Esophagus squamous epithelium (tissue), 5 donors: ENCODE measurements at regions of chr6 and their contacts with region 1.

Region 1: GRCh38 chr6:130322673-130323268 is 43.0 kb upstream of the TMEM200A start:
- DNase-seq: no peak
- H3K4me3 ChIP-seq: no peak overlapping the region
- H3K27ac ChIP-seq: no peak overlapping the region
- H3K4me1 ChIP-seq: no peaks in the 10 kb centered on the region
- H3K27me3 ChIP-seq: no peaks in the 10 kb centered on the region
- CTCF ChIP-seq: peak; percentile 30 to 86 (median 80)
- POLR2A ChIP-seq: no peak

Region 2: DNA sequence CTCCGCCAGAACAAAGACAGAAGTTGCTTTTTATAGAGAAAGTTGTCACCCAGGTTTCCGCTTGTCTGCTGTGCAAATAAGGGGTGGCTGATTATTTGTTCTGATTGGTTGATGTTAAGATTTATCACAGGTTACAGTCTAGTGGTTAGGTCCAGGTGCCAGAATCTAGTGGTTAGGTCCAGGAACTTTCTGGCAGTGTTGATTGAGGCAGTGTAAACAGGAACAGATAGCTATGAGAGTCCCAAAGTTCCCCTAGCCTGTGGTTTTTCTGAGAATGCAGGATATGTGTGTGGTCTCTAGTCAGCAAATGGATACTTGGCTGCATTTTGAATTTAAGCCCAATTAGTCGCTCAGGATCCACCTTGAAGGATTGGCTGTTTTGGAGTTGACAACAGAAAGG is 191.0 kb after region 1 on chr6:
- intact Hi-C with region 1: no loop called
- DNase-seq: no peak
- H3K4me3 ChIP-seq: no peak overlapping the region
- H3K27ac ChIP-seq: no peak overlapping the region
- H3K4me1 ChIP-seq: peaks cover 0 to 13% (median 0%) of the 10 kb centered on the region in 3 donors
- H3K27me3 ChIP-seq: no peaks in the 10 kb centered on the region
- CTCF ChIP-seq: no peak
- POLR2A ChIP-seq: no peak

Region 3: DNA sequence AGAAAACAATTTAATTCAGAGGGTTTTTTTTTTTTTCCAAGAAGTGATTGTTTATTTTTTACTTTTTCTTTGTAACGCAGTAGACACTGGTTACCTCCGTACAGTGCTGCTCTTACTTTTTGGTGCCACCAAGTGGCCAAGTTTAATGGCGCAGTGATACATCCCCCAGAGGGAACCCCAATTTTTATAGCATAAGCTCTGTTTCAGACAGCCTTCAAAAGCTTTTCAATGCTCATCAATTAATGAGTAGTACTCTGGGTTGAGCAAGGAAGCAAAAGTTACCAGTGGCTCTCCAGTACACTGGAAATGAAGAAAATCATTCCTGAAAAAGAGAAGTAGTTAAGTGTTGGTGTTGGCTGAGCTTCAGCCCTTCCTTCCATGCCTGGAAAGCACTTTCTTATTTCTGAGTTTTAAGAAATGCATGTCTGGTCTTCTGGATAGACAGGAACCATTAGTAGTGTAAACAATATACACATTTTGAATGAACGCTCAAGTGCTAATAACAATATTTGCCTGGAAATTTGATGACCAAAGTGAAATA is 375.3 kb after region 1 on chr6:
- intact Hi-C with region 1: loop called (anchors 5 kb)
- DNase-seq: no peak
- H3K4me3 ChIP-seq: no peak overlapping the region
- H3K27ac ChIP-seq: no peak overlapping the region
- H3K4me1 ChIP-seq: peaks cover 0 to 4% (median 0%) of the 10 kb centered on the region in 3 donors
- H3K27me3 ChIP-seq: peaks cover 0 to 12% (median 0%) of the 10 kb centered on the region in 4 donors
- CTCF ChIP-seq: peak; percentile 45 to 79 (median 68)
- POLR2A ChIP-seq: no peak

Region 4: GRCh38 chr6:130853555-130854183 is 530.9 kb after region 1 on chr6:
- intact Hi-C with region 1: loop called (anchors 10 kb)
- DNase-seq: no peak
- H3K4me3 ChIP-seq: no peak overlapping the region
- H3K27ac ChIP-seq: no peak overlapping the region
- H3K4me1 ChIP-seq: no peaks in the 10 kb centered on the region
- H3K27me3 ChIP-seq: no peaks in the 10 kb centered on the region
- CTCF ChIP-seq: no peak
- POLR2A ChIP-seq: no peak